ENCODE measurements at regions of chr12 and their contacts with region 1.

Region 1: DNA sequence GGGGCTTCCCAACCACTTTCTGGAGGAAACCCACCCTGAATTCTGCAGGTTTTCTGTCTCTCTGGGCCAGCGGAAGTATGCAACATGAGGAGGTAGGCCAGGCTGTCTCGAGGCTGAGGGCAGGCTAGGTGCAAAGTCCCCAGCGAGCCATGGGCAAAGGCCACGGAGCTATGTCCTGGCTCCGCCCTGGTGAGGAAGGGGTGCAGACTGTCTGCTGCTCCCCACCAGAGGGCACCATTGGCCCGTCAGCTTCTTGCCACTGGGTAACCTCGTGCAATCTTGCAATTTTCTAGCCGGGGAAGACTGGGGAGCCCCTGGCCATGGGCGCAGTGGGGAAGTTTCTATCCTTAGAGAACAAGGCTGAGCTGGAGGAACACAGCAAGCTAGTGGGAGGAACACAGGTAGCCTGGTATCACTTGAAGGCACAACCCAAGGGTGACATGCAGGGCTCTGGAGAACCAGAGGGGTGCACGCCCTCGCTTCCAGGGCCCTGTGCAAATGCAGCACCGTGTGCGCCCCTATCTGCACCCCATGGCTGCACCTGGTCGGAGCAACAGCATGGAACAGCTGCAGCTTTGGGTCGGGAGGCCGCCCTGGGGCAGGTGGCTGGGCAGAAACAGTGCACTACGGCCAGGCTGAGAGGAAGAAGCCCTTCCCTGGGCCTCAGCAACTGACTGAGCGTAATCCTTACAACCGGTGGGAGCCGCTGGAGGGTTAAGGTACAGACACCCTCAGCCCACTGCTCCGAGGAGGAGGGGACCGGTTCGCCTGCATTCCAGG is 27.6 kb upstream of the RPLP0 start:
- DNase-seq: peak; percentile 89
- ATAC-seq: peak; percentile 96
- H3K4me3 ChIP-seq: no peak overlapping the region
- H3K4me3 Mint-ChIP-seq: peak overlapping the region; percentile 12
- H3K27ac ChIP-seq: no peak overlapping the region
- H3K27ac Mint-ChIP-seq: no peak overlapping the region
- H3K4me1 ChIP-seq: peaks cover 59 to 61% of the 10 kb centered on the region in 2 donors
- H3K4me1 Mint-ChIP-seq: peaks cover 43% of the 10 kb centered on the region
- H3K27me3 ChIP-seq: peaks cover 0 to 80% (median 40%) of the 10 kb centered on the region in 4 experiments
- H3K27me3 Mint-ChIP-seq: peaks cover 33% of the 10 kb centered on the region
- CTCF ChIP-seq: peak; percentile 88

Region 2: GRCh38 chr12:118357257-118358007 is 1871.0 kb before region 1 on chr12:
- CTCF ChIA-PET with region 1: no interaction called
- POLR2A ChIA-PET with region 1: no interaction called
- intact Hi-C with region 1: no loop called
- DNase-seq: peak; percentile 76
- ATAC-seq: peak; percentile 50
- H3K4me3 ChIP-seq: peak overlapping the region in 4 of 5 experiments; percentile 15 to 92 (median 48)
- H3K4me3 Mint-ChIP-seq: peak overlapping the region; percentile 93
- H3K27ac ChIP-seq: peak overlapping the region; percentile 43 to 87
- H3K27ac Mint-ChIP-seq: peak overlapping the region; percentile 69
- H3K4me1 ChIP-seq: peaks cover 23 to 38% of the 10 kb centered on the region in 2 donors
- H3K4me1 Mint-ChIP-seq: peaks cover 42% of the 10 kb centered on the region
- H3K27me3 ChIP-seq: no peaks in the 10 kb centered on the region
- H3K27me3 Mint-ChIP-seq: no peaks in the 10 kb centered on the region
- CTCF ChIP-seq: peak; percentile 33

Region 3: DNA sequence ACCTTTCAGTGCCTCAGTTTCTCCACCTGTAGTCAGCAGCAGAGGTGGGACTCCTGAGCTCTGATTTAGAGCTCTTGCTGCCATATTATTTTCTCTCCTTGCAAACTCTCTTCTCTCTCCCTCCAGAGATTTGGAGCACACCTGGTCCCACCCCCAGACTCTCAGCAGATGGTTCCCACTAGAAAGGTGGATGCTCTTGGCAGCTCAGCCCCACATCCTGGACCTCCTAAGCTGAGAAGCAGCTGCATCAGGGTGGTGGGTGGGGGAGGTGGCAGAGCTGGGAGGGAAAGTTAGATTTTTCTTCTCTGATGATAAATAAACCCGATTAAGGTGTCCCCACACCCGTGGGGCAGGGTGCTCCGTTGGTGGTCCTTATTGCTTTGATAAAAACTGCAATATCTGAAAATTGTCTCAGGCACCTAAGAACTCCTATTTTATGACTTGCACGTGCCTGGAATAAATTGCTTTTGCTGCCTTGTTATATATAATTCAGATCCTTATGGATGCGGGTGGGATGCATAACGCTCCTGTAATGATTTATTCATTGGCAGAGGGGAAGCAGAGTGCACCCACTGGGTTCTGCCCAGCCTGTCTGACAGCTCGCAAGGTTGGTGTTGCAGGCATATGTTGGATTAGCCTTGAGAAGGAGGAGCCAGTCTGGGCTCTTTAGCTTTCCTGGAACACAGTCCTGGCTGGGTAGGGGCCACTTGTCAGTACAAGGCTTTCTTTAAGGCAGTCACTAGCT is 1637.9 kb before region 1 on chr12:
- CTCF ChIA-PET with region 1: no interaction called
- POLR2A ChIA-PET with region 1: no interaction called
- intact Hi-C with region 1: no loop called
- DNase-seq: no peak
- ATAC-seq: no peak
- H3K4me3 ChIP-seq: no peak overlapping the region
- H3K4me3 Mint-ChIP-seq: no peak overlapping the region
- H3K27ac ChIP-seq: no peak overlapping the region
- H3K27ac Mint-ChIP-seq: no peak overlapping the region
- H3K4me1 ChIP-seq: no peaks in the 10 kb centered on the region
- H3K4me1 Mint-ChIP-seq: no peaks in the 10 kb centered on the region
- H3K27me3 ChIP-seq: no peaks in the 10 kb centered on the region
- H3K27me3 Mint-ChIP-seq: no peaks in the 10 kb centered on the region
- CTCF ChIP-seq: no peak

Region 4: GRCh38 chr12:120086801-120087621 is 141.5 kb before region 1 on chr12:
- CTCF ChIA-PET with region 1: no interaction called
- POLR2A ChIA-PET with region 1: no interaction called
- intact Hi-C with region 1: no loop called
- DNase-seq: peak; percentile 100
- ATAC-seq: peak; percentile 91
- H3K4me3 ChIP-seq: peak overlapping the region; percentile 26 to 63 (median 43)
- H3K4me3 Mint-ChIP-seq: peak overlapping the region; percentile 81
- H3K27ac ChIP-seq: peak overlapping the region; percentile 43 to 49
- H3K27ac Mint-ChIP-seq: peak overlapping the region; percentile 88
- H3K4me1 ChIP-seq: peaks cover 9 to 13% of the 10 kb centered on the region in 2 donors
- H3K4me1 Mint-ChIP-seq: peaks cover 16% of the 10 kb centered on the region
- H3K27me3 ChIP-seq: no peaks in the 10 kb centered on the region
- H3K27me3 Mint-ChIP-seq: no peaks in the 10 kb centered on the region
- CTCF ChIP-seq: peak; percentile 98

Region 5: DNA sequence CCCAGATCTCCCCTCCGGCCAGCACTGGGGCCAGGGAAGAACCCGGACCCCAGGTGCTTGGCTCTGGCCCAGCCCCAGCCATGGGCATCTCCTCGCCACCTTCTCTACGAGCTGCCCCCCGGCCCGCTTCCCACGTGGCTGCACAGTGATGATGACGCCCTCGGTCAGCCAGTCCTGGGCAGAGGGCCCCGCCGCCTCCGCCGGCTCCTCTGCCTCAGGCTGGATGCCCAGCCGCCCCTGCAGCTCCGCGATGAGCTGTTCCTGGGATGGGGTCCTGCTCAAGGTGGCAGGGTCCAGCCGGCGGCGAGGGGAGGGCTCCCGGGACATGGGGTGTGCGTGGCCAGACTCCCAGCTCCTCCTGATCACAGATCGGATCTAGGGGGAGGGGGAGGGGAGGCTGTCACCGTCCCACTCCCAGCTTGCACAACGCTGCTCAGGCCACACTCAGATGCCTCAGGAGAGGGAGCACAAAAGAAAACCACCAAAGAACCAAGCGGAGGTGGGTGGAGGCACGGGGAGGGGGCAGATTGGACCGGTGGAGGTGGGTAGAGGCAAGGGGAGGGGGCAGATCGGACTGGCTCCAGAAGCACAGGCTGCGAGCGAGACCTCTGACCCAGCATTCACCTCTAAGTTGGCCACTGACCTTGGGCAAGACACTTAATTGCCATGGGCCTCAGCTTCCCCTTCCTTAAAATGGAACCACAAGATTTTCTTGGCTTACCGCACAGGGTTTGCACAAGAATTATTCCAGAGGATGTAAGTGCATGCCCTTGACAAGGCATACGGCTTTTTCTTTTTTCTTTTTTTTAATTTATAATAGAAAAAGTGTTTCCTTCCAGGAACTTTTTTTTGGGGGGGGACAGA is 11.5 kb before region 1 on chr12:
- CTCF ChIA-PET with region 1: interaction called, 28 read pairs
- POLR2A ChIA-PET with region 1: interaction called, 3 read pairs
- intact Hi-C with region 1: no loop called
- DNase-seq: no peak
- ATAC-seq: no peak
- H3K4me3 ChIP-seq: no peak overlapping the region
- H3K4me3 Mint-ChIP-seq: no peak overlapping the region
- H3K27ac ChIP-seq: no peak overlapping the region
- H3K27ac Mint-ChIP-seq: no peak overlapping the region
- H3K4me1 ChIP-seq: no peaks in the 10 kb centered on the region
- H3K4me1 Mint-ChIP-seq: no peaks in the 10 kb centered on the region
- H3K27me3 ChIP-seq: peaks cover 0 to under 1% (median 0%) of the 10 kb centered on the region in 4 experiments
- H3K27me3 Mint-ChIP-seq: peaks cover 4% of the 10 kb centered on the region
- CTCF ChIP-seq: no peak

Region 6: DNA sequence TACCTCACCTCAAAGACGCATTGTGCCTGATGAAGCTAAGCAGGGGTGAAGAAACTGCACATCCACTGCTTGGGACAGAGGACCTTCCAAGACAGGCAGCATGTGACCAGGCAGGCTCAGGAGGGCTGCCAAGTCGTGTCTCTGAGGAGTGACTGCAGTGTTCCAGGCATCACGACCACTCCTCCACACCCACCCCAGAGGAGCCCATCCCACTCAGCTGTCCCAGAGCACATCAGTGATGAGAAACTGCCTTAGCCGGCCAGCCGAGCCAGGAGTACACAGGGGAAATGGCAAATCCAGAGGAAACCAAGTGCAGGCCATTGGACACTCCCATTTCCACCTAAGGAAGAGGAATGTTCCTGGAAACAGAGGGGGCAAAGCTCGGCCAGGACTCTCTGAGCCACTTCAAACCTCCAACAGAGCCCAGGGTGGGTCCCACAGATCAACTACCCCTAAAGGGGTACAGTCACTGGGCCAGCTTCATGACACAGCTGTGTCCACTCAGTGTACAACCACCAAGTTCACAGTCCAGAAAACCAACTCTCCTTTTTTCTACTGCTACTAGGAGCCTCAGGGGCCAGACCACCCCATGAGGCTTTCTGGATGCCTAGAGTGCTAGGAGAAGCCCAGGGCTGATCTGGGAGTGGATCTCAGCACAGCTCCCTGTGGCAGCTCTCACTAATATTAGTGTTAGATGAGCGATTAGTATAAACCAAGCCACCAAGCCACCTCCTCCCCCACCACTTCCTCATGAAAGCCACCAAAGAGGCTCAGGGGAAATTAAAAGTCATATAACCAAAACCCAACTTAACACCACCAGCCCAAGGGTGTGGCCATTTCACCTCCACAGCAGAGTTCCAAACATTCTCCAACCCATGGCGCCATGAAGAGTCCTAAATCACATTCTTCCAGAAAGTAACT is 21.7 kb after region 1 on chr12:
- CTCF ChIA-PET with region 1: interaction called, 54 read pairs
- POLR2A ChIA-PET with region 1: interaction called, 3 read pairs
- intact Hi-C with region 1: no loop called
- DNase-seq: peak; percentile 66
- ATAC-seq: peak; percentile 42
- H3K4me3 ChIP-seq: no peak overlapping the region
- H3K4me3 Mint-ChIP-seq: peak overlapping the region; percentile 56
- H3K27ac ChIP-seq: no peak overlapping the region
- H3K27ac Mint-ChIP-seq: peak overlapping the region; percentile 5
- H3K4me1 ChIP-seq: peaks cover 59 to 60% of the 10 kb centered on the region in 2 donors
- H3K4me1 Mint-ChIP-seq: peaks cover 51% of the 10 kb centered on the region
- H3K27me3 ChIP-seq: peaks cover 0 to 65% (median 40%) of the 10 kb centered on the region in 4 experiments
- H3K27me3 Mint-ChIP-seq: peaks cover 48% of the 10 kb centered on the region
- CTCF ChIP-seq: no peak

Region 7: GRCh38 chr12:120286796-120287465 is 58.5 kb after region 1 on chr12:
- CTCF ChIA-PET with region 1: interaction called, 22 read pairs
- POLR2A ChIA-PET with region 1: interaction called, 12 read pairs
- intact Hi-C with region 1: no loop called
- DNase-seq: no peak
- ATAC-seq: no peak
- H3K4me3 ChIP-seq: no peak overlapping the region
- H3K4me3 Mint-ChIP-seq: no peak overlapping the region
- H3K27ac ChIP-seq: no peak overlapping the region
- H3K27ac Mint-ChIP-seq: no peak overlapping the region
- H3K4me1 ChIP-seq: peaks cover 8 to 13% of the 10 kb centered on the region in 2 donors
- H3K4me1 Mint-ChIP-seq: peaks cover 13% of the 10 kb centered on the region
- H3K27me3 ChIP-seq: peaks cover 0 to 2% (median 0%) of the 10 kb centered on the region in 4 experiments
- H3K27me3 Mint-ChIP-seq: no peaks in the 10 kb centered on the region
- CTCF ChIP-seq: no peak

Region 8: GRCh38 chr12:120327593-120327992 is 99.1 kb after region 1 on chr12 and contains the start of gene PLA2G1B:
- CTCF ChIA-PET with region 1: interaction called, 7 read pairs
- POLR2A ChIA-PET with region 1: no interaction called
- intact Hi-C with region 1: loop called (anchors 1 kb)
- DNase-seq: no peak
- ATAC-seq: no peak
- H3K4me3 ChIP-seq: no peak within 1 kb of the TSS
- H3K4me3 Mint-ChIP-seq: no peak within 1 kb of the TSS
- H3K27ac ChIP-seq: no peak within 1 kb of the TSS
- H3K27ac Mint-ChIP-seq: no peak within 1 kb of the TSS
- H3K4me1 ChIP-seq: peaks cover 0 to 9% of the 10 kb centered on the region in 2 donors
- H3K4me1 Mint-ChIP-seq: peaks cover 7% of the 10 kb centered on the region
- H3K27me3 ChIP-seq: peaks cover 0 to 10% (median 2%) of the 10 kb centered on the region in 4 experiments
- H3K27me3 Mint-ChIP-seq: peaks cover 17% of the 10 kb centered on the region
- CTCF ChIP-seq: no peak
- total RNA-seq, gene PLA2G1B: not detected in 2 replicates

Region 9: GRCh38 chr12:120428597-120429229 is 200.2 kb after region 1 on chr12:
- CTCF ChIA-PET with region 1: interaction called, 10 read pairs
- POLR2A ChIA-PET with region 1: no interaction called
- intact Hi-C with region 1: no loop called
- DNase-seq: no peak
- ATAC-seq: no peak
- H3K4me3 ChIP-seq: no peak overlapping the region
- H3K4me3 Mint-ChIP-seq: no peak overlapping the region
- H3K27ac ChIP-seq: no peak overlapping the region
- H3K27ac Mint-ChIP-seq: no peak overlapping the region
- H3K4me1 ChIP-seq: no peaks in the 10 kb centered on the region
- H3K4me1 Mint-ChIP-seq: no peaks in the 10 kb centered on the region
- H3K27me3 ChIP-seq: peaks cover 0 to 16% (median 3%) of the 10 kb centered on the region in 4 experiments
- H3K27me3 Mint-ChIP-seq: peaks cover 20% of the 10 kb centered on the region
- CTCF ChIP-seq: no peak

Measured in B cell (primary cell).